Right lobe of liver (tissue), 6 donors: ENCODE measurements at regions of chr11 and their contacts with region 1.

Region 1: DNA sequence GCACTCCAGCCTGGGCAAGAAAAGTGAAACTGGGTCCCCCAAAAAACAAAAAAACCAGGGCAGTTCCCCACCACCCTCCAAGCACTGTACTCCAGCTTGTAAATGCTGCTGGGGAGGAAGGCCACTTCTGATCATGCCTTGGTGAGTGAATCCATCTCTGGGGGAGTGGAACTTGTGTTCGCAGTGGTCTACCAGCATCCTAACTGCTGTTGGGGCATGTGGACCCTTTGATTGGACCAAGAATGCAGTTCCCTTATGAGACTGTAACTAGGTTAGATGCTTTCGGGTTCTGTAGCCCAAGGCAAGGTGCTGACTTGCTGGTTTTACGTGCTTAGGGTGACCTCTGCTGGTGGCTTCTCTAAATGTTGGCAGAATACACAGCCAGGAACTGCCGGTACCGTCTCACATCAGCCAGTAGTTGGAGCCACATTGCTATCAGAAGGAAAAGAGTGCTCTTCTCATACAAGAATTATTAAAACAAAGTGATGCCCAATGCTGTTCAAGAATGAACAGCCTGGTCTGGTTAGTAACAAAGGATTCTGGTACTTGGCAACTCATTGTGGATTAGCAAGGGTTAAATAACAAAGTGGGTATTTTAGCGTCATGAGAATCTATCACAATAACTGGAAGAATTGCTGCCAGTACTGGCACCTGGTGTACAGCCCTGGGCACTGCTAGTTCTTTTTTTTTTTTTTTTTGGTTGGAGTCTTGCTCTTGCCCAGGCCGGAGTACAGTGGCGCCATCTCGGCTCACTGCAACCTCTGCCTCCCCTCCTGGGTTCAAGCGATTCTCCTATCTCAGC is 13.0 kb downstream of the EIF1AD start:
- DNase-seq: peak; percentile 69 to 89 (median 74)
- ATAC-seq: peak; percentile 100
- H3K4me3 ChIP-seq: no peak overlapping the region
- H3K27ac ChIP-seq: no peak overlapping the region
- H3K4me1 ChIP-seq: no peaks in the 10 kb centered on the region
- H3K27me3 ChIP-seq: no peaks in the 10 kb centered on the region
- CTCF ChIP-seq: peak; percentile 89 to 99 (median 94)
- POLR2A ChIP-seq: no peak

Region 2: DNA sequence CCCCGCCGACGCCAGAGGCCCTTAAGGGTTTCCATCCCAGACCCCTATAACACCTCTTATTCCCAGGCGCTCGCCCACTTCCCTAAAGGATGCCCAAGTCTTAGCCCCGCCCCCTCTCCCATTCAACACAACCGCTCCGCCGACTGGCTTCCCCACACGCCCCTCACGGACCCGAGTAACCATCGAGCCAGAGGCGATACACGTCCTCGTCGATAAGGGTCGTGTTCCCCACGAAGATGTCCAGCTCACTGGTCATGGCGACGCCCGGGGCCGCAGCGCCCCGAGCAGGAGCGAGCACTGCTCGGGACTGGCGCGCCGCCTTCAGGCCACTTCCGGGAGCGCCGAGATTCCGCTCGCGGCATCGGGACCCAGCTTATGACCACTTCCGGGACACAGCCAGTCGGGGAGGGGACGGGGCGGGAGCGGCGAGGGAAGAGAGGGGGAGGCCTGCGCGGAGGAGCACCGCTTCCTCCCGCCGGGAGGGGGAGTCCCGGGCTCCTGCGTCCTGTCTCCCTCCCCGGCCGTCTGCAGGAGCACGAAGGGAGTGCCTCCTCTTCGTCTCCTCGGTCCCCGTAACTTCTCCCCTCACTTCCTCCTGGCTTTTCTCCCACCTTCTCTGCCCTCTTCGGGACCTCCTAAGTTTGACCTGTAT is 100.7 kb before region 1 on chr11 and contains the start of gene FIBP:
- intact Hi-C with region 1: loop called (anchors 10 kb)
- DNase-seq: peak; percentile 98 to 99 (median 98)
- ATAC-seq: peak; percentile 82 to 90 (median 86)
- H3K4me3 ChIP-seq: peak within 1 kb of the TSS; percentile 73 to 89 (median 80)
- H3K27ac ChIP-seq: peak within 1 kb of the TSS; percentile 81 to 88 (median 85)
- H3K4me1 ChIP-seq: peaks cover 0 to 32% (median 8%) of the 10 kb centered on the region in 4 donors
- H3K27me3 ChIP-seq: no peaks in the 10 kb centered on the region
- CTCF ChIP-seq: peak; percentile 79 to 88 (median 81)
- POLR2A ChIP-seq: peak; percentile 91
- total RNA-seq, gene FIBP: 19.4 to 66.1 (median 23.3) TPM

Region 3: DNA sequence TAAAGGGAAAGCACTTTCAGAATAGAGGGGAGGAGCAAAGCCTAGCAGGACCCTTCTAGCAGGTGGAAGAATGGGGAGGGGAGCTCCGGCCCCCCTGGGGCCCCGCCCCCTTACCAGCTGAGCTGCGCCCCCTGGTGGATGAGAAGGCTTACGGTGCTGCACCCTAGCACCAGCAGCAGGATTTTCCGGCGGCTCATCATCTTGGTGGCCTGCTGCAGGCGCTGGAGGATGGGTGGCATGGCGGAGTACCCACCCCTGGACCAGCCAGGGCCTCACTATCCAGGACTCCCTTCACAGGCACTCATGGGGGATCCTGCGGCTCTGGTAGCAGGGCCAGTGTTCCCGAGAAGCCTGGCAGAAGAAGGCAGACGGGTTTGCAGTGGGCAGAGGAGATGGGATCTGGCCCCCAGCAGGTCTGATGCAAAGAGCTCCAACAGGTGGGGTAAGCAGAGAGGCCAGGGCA is 56.2 kb after region 1 on chr11:
- intact Hi-C with region 1: no loop called
- DNase-seq: peak; percentile 77 to 78 (median 77)
- ATAC-seq: peak; percentile 83 to 94 (median 90)
- H3K4me3 ChIP-seq: no peak overlapping the region
- H3K27ac ChIP-seq: no peak overlapping the region
- H3K4me1 ChIP-seq: no peaks in the 10 kb centered on the region
- H3K27me3 ChIP-seq: no peaks in the 10 kb centered on the region
- CTCF ChIP-seq: peak; percentile 75 to 94 (median 90)
- POLR2A ChIP-seq: no peak